Kidney (tissue), 22 donors: ENCODE measurements at regions of chr19 and their contacts with region 1.

Region 1: DNA sequence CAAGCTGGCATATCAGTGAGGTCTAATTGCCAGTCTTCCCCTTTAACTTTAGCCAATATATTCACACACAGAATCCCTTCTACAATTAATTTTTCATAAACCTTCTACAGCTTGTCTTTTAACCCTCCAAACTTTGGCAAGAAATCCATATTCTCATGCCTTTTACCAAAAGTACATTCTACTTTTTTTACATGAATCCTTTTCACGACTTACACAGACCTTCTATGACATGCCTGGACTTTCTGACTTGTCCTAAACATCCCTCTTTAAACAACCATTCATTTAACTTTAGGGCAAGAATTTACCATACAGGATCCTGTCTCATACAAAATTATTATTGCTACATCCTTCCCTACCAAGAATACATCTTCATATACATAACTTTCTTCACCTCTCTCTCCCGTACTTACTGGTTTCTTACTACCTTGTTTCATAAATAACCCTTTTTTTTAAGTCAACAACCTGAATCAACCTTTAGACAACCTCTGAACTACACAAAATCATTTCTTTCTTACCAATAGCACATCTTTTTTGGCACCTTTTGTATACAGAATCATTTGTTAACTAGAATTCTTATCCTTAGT is 23.5 kb downstream of the ZNF544 start:
- DNase-seq: peak in 2 of 5 donors; percentile 34 to 48
- H3K4me3 ChIP-seq: no peak overlapping the region
- H3K27ac ChIP-seq: no peak overlapping the region
- H3K4me1 ChIP-seq: no peaks in the 10 kb centered on the region
- H3K27me3 ChIP-seq: no peaks in the 10 kb centered on the region
- CTCF ChIP-seq: no peak

Region 2: GRCh38 chr19:58203814-58204475 is 48.2 kb before region 1 on chr19:
- intact Hi-C with region 1: loop called (anchors 10 kb)
- DNase-seq: peak in 2 of 5 donors; percentile 11 to 47
- H3K4me3 ChIP-seq: no peak overlapping the region
- H3K27ac ChIP-seq: no peak overlapping the region
- H3K4me1 ChIP-seq: no peaks in the 10 kb centered on the region
- H3K27me3 ChIP-seq: no peaks in the 10 kb centered on the region
- CTCF ChIP-seq: no peak